Endothelial cell of umbilical vein (primary cell): ENCODE measurements at regions of chr9 and their contacts with region 1.

Region 1: DNA sequence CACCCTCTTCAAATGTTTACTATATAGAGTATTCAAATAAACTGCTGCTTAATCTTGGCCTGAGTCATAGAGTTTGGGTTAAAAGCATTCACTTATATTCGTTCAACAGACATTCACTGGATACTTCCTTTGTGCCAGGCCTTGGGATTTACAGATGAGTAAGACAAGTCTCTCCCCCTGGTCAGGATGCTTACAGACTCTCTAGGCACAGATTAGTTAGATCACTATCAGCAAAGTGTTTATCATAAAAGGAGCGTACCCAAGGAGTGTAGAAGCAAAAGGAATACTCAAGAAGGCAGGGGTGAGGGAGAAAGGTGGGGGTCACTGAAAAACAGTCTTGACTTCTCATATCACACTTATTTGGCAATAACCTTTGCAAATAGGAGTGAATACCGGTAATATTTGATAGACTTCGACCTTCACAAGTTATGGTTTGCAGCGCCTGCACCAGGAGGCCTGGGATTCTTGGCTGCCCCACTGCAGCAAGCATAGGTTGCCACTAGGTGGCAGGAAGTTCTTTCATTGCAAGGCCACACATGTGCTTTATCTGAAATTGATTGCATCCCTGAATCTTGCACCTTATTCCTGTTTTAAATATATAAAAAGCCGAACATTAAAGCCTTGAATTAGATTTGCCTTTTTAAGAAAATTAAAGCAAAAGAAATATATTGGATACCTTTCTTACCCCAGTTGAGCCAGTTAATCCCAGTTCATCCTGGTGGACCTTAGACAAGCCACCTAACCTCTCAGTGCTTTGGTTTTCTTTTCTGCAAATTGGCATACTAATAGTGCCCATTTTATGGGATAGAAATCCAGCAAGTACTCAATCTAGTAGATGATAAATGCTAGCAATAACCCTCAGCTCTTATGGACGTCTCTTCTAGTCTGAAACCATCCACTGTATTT is 6.5 kb upstream of the TRMT10B start:
- DNase-seq: peak; percentile 64
- H3K4me3 ChIP-seq: no peak overlapping the region
- H3K27ac ChIP-seq: no peak overlapping the region
- H3K4me1 ChIP-seq: no peaks in the 10 kb centered on the region
- H3K27me3 ChIP-seq: peaks cover 0 to 6% of the 10 kb centered on the region in 2 experiments
- CTCF ChIP-seq: peak; percentile 84 to 91
- POLR2A ChIP-seq: no peak

Region 2: DNA sequence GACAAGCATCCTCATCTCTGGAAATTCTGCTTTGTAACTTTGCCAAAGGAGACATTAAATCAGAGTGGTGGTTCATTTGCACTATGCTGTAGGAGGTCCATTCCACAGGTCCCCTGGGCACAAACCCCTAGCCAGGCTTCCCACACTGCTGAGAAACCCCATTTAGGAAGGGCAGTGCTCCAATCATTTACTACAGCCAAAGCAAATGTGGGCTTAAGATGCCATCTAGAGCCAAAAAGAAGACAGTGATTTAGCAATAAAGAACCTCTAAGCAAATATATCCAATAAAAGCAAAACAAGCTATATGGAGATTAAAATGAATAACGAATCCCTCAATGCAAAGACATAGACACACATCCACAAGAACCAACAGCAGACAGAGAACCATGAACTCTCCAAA is 516.4 kb after region 1 on chr9:
- CTCF ChIA-PET with region 1: interaction called, 21 read pairs
- POLR2A ChIA-PET with region 1: no interaction called
- dilution Hi-C with region 1: no loop called
- intact Hi-C with region 1: loop called (anchors 1 kb)
- DNase-seq: peak; percentile 53
- H3K4me3 ChIP-seq: no peak overlapping the region
- H3K27ac ChIP-seq: no peak overlapping the region
- H3K4me1 ChIP-seq: no peaks in the 10 kb centered on the region
- H3K27me3 ChIP-seq: peaks cover 6 to 13% of the 10 kb centered on the region in 2 experiments
- CTCF ChIP-seq: peak in 1 of 2 donors; percentile 35
- POLR2A ChIP-seq: no peak

Region 3: GRCh38 chr9:38362852-38363593 is 615.9 kb after region 1 on chr9:
- CTCF ChIA-PET with region 1: interaction called, 3 read pairs
- POLR2A ChIA-PET with region 1: no interaction called
- dilution Hi-C with region 1: no loop called
- intact Hi-C with region 1: loop called (anchors 2 kb)
- DNase-seq: peak; percentile 66
- H3K4me3 ChIP-seq: no peak overlapping the region
- H3K27ac ChIP-seq: no peak overlapping the region
- H3K4me1 ChIP-seq: no peaks in the 10 kb centered on the region
- H3K27me3 ChIP-seq: peaks cover 2 to 3% of the 10 kb centered on the region in 2 experiments
- CTCF ChIP-seq: peak; percentile 47 to 55
- POLR2A ChIP-seq: no peak

Region 4: DNA sequence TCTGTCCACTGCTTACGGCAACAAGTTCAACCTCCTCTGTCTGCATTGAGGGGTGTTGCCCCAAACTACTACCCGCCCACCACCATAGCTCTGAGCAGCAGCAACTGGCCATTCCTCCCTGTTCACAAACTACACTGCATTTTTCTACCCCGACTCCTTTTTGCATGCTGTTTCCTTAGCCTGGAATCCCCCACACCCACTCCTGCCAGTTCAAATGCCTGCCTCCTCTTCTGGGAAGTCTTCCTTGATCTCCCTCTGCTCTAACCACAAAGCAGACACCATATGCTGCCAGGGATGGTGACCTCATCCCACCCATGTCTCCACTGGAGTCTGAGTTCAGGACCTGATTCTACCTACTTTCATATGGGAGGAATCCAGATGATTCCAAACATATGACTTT is 658.7 kb after region 1 on chr9:
- CTCF ChIA-PET with region 1: interaction called, 3 read pairs
- POLR2A ChIA-PET with region 1: no interaction called
- dilution Hi-C with region 1: no loop called
- intact Hi-C with region 1: loop called (anchors 1 kb)
- DNase-seq: no peak
- H3K4me3 ChIP-seq: no peak overlapping the region
- H3K27ac ChIP-seq: no peak overlapping the region
- H3K4me1 ChIP-seq: no peaks in the 10 kb centered on the region
- H3K27me3 ChIP-seq: peaks cover 8 to 11% of the 10 kb centered on the region in 2 experiments
- CTCF ChIP-seq: no peak
- POLR2A ChIP-seq: no peak